Activated T-helper 1 cell treated with anti-CD3 and anti-CD28 coated beads, Interleukin-12 subunit alpha, Interleukin-12 subunit beta, Interleukin-2, Interleukin-4 antibody, amounts not matched to agents 30 ng/mL and 10 ng/mL and 1 ng/mL, durations not matched to agents 14 hours and 24 hours and 36 hours (primary cell): ENCODE measurements at regions of chr19 and their contacts with region 1.

Region 1: GRCh38 chr19:6674868-6675305 is 4.9 kb upstream of the TNFSF14 start:
- DNase-seq: peak; percentile 84
- H3K4me3 Mint-ChIP-seq: peak overlapping the region; percentile 70
- H3K27ac Mint-ChIP-seq: peak overlapping the region; percentile 94
- H3K4me1 Mint-ChIP-seq: peaks cover 79% of the 10 kb centered on the region
- H3K27me3 Mint-ChIP-seq: peaks cover 4% of the 10 kb centered on the region

Region 2: DNA sequence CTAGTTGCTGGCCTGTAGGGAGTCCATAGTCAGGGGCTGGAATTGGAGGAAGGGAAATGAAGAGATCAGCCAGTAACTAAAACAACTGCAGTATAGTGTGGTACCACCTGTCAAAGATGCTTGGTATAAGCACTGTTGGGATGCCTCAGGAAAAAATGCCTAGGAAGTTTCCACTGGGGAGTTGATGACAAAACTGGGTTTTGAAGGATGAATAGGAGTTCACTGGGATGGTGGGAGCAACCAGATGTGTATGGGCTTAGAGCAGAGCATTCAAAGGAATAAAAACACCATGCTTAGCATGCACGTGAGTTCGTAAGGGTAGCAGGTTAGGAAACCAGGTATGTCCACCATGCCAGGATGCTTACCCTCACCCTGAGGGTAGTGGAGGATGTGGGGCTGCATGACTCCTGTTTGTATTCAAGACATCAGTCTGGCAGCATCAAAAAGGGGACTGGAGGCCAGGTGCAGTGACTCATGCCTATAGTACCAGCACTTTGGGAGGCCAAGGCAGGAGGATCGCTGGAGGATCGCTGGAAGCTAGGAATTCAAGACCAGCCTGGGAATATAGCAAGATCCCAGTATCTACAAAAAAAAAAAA is 947.3 kb before region 1 on chr19:
- intact Hi-C with region 1: no loop called
- DNase-seq: no peak
- H3K4me3 Mint-ChIP-seq: no peak overlapping the region
- H3K27ac Mint-ChIP-seq: no peak overlapping the region
- H3K4me1 Mint-ChIP-seq: no peaks in the 10 kb centered on the region
- H3K27me3 Mint-ChIP-seq: peaks cover 7% of the 10 kb centered on the region

Region 3: GRCh38 chr19:6038634-6039405 is 636.1 kb before region 1 on chr19:
- intact Hi-C with region 1: loop called (anchors 5 kb)
- DNase-seq: no peak
- H3K4me3 Mint-ChIP-seq: no peak overlapping the region
- H3K27ac Mint-ChIP-seq: peak overlapping the region; percentile 92
- H3K4me1 Mint-ChIP-seq: peaks cover 14% of the 10 kb centered on the region
- H3K27me3 Mint-ChIP-seq: no peaks in the 10 kb centered on the region

Region 4: DNA sequence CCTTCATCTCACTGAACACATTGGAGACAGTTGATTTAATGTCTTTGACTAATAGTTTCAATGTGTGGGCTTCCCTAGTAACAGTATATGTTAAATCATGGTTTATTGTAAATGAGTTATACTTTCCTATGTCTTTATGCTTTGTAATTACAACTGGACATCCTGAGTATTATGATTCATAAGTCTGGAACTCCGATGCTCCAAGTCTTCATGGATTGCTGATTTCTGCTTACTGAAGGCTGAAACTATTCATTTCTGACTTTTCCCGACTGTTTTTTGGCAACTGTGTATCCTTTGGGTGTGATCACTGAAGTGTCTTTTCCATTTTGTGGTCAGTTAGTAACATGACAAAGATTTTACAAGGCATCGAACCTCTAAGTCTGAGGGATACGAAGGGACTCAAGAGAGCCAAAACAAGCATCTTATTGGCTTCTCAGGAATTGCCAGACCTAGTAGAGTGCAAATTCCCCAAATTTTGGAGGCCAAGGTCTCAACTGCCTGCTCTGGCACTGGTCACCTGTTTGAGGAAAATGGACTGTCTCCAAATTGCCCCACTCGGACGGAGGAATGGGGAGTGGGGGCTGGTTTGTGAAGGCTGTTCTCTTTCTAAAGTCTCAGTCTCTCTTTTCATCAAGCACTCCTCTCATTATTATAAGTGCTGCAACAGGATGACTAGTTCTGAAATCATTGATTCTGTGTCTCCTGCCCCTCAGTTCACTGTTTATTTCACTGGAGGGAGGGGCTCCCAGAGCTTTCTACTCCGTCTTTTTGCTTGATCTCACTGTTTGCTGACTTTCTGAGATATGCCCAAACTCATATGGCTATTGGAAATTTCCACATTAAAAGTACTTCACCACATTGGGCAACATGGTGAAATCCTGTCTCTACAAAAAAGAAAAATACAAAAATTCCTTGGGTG is 63.7 kb before region 1 on chr19:
- intact Hi-C with region 1: loop called (anchors 1 kb)
- DNase-seq: no peak
- H3K4me3 Mint-ChIP-seq: no peak overlapping the region
- H3K27ac Mint-ChIP-seq: no peak overlapping the region
- H3K4me1 Mint-ChIP-seq: peaks cover 25% of the 10 kb centered on the region
- H3K27me3 Mint-ChIP-seq: peaks cover 27% of the 10 kb centered on the region

Region 5: DNA sequence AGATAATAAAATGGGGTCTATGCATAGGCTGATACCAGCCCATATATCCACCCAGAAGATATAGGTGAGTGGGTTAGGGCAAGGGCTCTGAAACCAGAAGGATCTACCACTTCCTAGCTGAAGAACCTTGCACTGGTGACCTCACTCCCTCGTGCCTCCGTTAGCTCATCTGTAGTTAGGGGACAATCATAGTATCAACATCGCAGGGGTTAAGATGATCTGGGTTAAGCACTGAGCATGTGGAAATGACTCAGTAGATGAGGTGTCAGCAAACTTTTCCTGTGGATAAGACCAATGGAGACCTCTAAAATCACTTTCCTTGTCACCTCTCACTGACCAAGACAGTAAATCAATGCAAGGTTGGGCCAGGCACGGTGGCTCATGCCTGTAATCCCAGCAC is 35.4 kb before region 1 on chr19:
- intact Hi-C with region 1: loop called (anchors 1 kb)
- DNase-seq: no peak
- H3K4me3 Mint-ChIP-seq: peak overlapping the region; percentile 37
- H3K27ac Mint-ChIP-seq: peak overlapping the region; percentile 45
- H3K4me1 Mint-ChIP-seq: peaks cover 44% of the 10 kb centered on the region
- H3K27me3 Mint-ChIP-seq: peaks cover 3% of the 10 kb centered on the region

Region 6: DNA sequence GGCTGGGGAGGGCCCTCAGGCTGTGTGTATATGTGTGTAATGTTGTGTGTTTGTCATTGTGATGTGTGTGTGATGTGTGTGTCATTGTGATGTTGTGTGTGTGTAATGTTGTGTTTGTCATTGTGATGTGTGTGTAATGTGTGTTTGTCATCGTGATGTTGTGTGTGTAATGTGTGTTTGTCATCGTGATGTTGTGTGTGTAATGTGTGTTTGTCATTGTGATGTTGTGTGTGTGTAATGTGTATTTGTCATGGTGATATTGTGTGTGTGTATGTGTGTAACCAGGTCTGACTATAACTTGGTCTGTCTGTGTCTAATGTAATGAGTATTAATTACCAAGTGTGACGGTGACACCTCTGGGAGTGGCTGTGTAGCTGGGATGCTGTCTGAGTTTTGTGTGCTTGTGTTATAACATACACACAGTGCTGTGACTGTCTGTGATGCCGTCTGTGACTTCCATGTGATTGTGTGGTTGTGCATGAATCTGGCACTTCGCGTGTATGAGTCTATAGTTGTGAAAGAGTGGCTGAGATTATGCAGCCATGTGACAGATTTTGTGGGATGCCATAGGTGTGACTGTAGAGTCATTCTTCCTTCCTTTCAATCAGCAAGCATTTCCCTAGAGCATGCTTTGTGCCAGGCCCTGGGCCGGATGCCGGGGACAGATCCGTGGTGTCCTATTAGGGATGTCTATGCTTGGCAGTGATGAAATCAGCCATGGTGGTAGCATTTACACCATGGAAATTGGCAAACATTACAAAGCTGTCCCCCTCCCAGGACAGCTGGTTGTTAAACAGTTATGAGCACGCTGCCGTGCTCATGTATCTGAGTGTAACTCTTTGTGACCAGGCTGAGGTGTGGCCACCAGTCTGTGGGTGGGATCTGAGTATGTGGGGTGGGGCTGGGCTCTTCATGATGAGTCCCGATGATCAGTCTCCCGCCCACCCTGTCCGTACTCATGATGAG is 11.4 kb before region 1 on chr19:
- intact Hi-C with region 1: loop called (anchors 1 kb)
- DNase-seq: no peak
- H3K4me3 Mint-ChIP-seq: no peak overlapping the region
- H3K27ac Mint-ChIP-seq: no peak overlapping the region
- H3K4me1 Mint-ChIP-seq: peaks cover 12% of the 10 kb centered on the region
- H3K27me3 Mint-ChIP-seq: no peaks in the 10 kb centered on the region

Region 7: GRCh38 chr19:7191946-7192691 is 517.2 kb after region 1 on chr19:
- intact Hi-C with region 1: loop called (anchors 5 kb)
- DNase-seq: peak; percentile 37
- H3K4me3 Mint-ChIP-seq: no peak overlapping the region
- H3K27ac Mint-ChIP-seq: peak overlapping the region; percentile 46
- H3K4me1 Mint-ChIP-seq: peaks cover 21% of the 10 kb centered on the region
- H3K27me3 Mint-ChIP-seq: peaks cover 26% of the 10 kb centered on the region